Mammary epithelial cell (primary cell): ENCODE measurements at regions of chr15 and their contacts with region 1.

Region 1: DNA sequence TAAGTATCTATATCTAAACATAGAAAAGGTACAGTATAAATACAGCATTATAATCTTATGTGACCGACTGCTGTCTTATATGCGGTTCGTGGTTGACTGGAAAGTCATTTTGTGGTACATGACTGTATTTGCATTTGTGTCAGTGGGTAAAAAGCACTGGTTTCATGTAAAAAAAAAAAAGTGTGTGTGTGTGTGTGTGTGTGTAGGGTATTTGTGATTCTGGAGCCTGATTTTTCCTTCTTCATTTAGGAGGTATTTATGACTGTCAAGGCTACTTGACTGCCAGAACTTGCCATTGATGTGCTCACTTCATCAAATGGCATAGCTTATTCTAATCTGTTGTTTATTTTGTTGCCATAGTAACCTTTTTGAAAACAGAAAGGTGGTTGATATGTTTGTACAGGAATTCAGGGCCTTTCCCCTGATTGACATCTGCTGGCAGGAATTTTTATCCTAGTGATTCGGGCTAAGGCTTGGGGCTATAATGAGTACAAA is 63.2 kb downstream of the AKAP13 start:
- DNase-seq: peak; percentile 88
- H3K4me3 ChIP-seq: no peak overlapping the region
- H3K27ac ChIP-seq: peak overlapping the region; percentile 77
- H3K4me1 ChIP-seq: peaks cover 19% of the 10 kb centered on the region
- H3K27me3 ChIP-seq: no peaks in the 10 kb centered on the region
- CTCF ChIP-seq: peak in 1 of 2 donors; percentile 31

Region 2: DNA sequence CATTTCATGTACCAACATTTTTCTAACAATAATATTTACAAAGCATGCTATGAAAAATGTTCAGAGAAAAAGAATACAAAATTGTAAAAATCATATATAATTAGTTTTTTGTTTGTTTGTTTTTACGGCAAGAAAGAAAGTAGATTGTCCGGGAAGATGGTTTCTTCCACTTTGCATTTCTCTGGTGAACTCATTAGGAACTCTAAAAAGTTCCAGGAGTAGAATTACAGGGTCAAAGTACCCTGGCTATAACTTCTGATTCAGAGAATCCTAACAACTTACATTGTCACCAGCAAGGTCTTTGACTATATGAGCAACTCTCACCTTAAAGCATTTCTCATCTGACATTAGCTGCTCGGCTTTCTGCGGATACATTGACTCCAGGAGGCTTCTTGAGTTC is 265.3 kb before region 1 on chr15:
- CTCF ChIA-PET with region 1: no interaction called
- dilution Hi-C with region 1: no loop called
- in situ Hi-C with region 1: loop called in 1 of 2 experiments (anchors 25 kb)
- intact Hi-C with region 1: no loop called
- DNase-seq: no peak
- H3K4me3 ChIP-seq: no peak overlapping the region
- H3K27ac ChIP-seq: no peak overlapping the region
- H3K4me1 ChIP-seq: peaks cover 11% of the 10 kb centered on the region
- H3K27me3 ChIP-seq: no peaks in the 10 kb centered on the region
- CTCF ChIP-seq: no peak

Region 3: GRCh38 chr15:85463276-85463892 is 19.7 kb after region 1 on chr15:
- CTCF ChIA-PET with region 1: no interaction called
- dilution Hi-C with region 1: no loop called
- in situ Hi-C with region 1: no loop called
- intact Hi-C with region 1: no loop called
- DNase-seq: no peak
- H3K4me3 ChIP-seq: no peak overlapping the region
- H3K27ac ChIP-seq: no peak overlapping the region
- H3K4me1 ChIP-seq: peaks cover 13% of the 10 kb centered on the region
- H3K27me3 ChIP-seq: no peaks in the 10 kb centered on the region
- CTCF ChIP-seq: no peak

Region 4: DNA sequence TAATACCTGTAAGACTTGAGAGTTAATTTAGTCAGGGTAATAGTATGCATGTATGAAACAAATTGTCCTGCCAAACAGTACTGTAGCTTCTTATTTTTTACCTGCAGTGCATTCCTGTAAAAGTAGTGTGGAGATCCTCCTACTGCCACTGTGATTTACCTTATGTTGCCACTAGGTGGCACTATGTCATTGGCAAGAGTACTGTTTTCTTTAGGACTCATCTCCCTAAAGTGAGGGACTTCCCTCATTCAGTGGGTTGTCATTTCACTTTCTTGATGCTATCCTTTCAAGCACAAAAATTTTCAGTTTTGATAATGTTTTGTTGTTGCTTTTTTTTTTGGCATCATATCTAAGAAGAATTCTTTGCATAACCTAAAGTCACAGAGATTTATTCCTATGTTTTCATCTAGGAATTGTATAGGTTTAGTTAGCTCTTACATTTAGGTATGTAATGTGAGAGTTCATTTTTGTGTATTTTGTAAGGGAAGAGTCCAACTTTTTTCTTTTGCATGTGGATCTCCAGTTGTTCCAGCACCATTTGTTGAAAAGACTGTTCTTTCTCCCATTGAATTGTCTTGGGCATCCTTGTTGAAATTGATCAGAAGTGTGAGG is 42.4 kb after region 1 on chr15:
- CTCF ChIA-PET with region 1: no interaction called
- dilution Hi-C with region 1: no loop called
- in situ Hi-C with region 1: no loop called
- intact Hi-C with region 1: no loop called
- DNase-seq: peak; percentile 79
- H3K4me3 ChIP-seq: no peak overlapping the region
- H3K27ac ChIP-seq: no peak overlapping the region
- H3K4me1 ChIP-seq: peaks cover 24% of the 10 kb centered on the region
- H3K27me3 ChIP-seq: no peaks in the 10 kb centered on the region
- CTCF ChIP-seq: peak; percentile 61 to 78